Activated CD4-positive, alpha-beta memory T cell treated with anti-CD3 and anti-CD28 coated beads for 36 hours (primary cell): ENCODE measurements at regions of chr22 and their contacts with region 1.

Region 1: GRCh38 chr22:18077639-18078328 is at the start of gene PEX26:
- DNase-seq: peak; percentile 97
- H3K4me3 Mint-ChIP-seq: peak within 1 kb of the TSS; percentile 95
- H3K27ac Mint-ChIP-seq: peak within 1 kb of the TSS; percentile 96
- H3K4me1 Mint-ChIP-seq: peaks cover 51% of the 10 kb centered on the region
- H3K27me3 Mint-ChIP-seq: no peaks in the 10 kb centered on the region
- total RNA-seq, gene PEX26: 56.3 to 56.8 TPM

Region 2: GRCh38 chr22:17638432-17639246 is 439.1 kb before region 1 on chr22 and contains the start of gene BCL2L13:
- CTCF ChIA-PET with region 1: no interaction called
- POLR2A ChIA-PET with region 1: interaction called, 4 read pairs
- intact Hi-C with region 1: loop called (anchors 5 kb)
- DNase-seq: peak; percentile 93
- H3K4me3 Mint-ChIP-seq: peak within 1 kb of the TSS; percentile 87
- H3K27ac Mint-ChIP-seq: peak within 1 kb of the TSS; percentile 89
- H3K4me1 Mint-ChIP-seq: peaks cover 21% of the 10 kb centered on the region
- H3K27me3 Mint-ChIP-seq: no peaks in the 10 kb centered on the region
- total RNA-seq, gene BCL2L13: 34.5 to 36.2 TPM

Region 3: GRCh38 chr22:17742527-17742902 is 335.3 kb before region 1 on chr22:
- CTCF ChIA-PET with region 1: interaction called, 73 read pairs
- POLR2A ChIA-PET with region 1: no interaction called
- intact Hi-C with region 1: loop called (anchors 2 kb)
- DNase-seq: peak; percentile 81
- H3K4me3 Mint-ChIP-seq: no peak overlapping the region
- H3K27ac Mint-ChIP-seq: no peak overlapping the region
- H3K4me1 Mint-ChIP-seq: peaks cover 2% of the 10 kb centered on the region
- H3K27me3 Mint-ChIP-seq: no peaks in the 10 kb centered on the region

Region 4: DNA sequence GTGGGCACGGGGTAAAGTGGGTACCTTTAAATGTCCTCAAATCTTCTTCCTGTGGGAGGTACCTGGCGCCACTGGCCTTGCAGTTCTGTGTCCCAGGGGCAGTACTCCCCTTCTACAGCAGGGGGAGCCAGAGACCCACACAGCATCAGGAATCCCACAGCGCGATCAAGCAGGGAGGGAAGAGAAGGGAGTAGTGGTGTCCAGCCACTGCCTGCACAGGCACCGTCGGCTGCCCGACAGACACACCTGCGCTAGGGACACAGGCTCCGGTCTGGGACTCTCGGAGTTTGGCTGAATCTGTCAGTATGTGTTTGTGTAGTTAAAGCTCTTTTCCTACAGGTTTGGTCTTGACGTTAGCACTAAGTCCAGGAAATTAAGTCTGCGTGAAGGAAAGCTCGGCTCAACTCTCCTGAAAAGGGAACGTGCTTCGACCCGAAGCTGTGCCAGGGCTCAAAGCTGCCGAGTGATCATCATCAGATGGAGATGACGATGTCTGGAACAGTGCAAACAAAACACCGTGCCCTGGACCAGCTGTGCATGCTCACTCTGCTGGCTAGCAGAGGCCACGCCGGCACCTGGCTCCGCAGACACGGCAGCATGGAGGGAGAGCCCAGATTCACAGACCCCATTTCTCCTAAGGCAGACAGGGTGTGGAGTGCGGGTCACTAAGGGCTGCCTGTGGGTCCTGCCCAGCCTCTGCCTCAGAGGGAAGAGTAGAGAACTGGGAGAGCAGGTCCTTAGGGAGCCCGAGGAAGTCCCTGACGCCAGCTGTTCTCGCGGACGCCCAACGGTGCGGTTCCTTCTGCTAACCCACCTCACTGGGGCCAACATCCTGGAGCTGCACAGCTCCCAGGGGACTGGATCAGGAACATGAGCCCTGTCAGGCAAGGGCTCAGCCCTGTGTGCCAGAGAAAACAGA is 247.5 kb before region 1 on chr22:
- CTCF ChIA-PET with region 1: interaction called, 210 read pairs
- POLR2A ChIA-PET with region 1: interaction called, 3 read pairs
- intact Hi-C with region 1: loop called (anchors 1 kb)
- DNase-seq: peak; percentile 88
- H3K4me3 Mint-ChIP-seq: no peak overlapping the region
- H3K27ac Mint-ChIP-seq: no peak overlapping the region
- H3K4me1 Mint-ChIP-seq: no peaks in the 10 kb centered on the region
- H3K27me3 Mint-ChIP-seq: no peaks in the 10 kb centered on the region

Region 5: GRCh38 chr22:18024276-18024947 is 53.4 kb before region 1 on chr22 and contains the start of gene MICAL3:
- CTCF ChIA-PET with region 1: interaction called, 40 read pairs
- POLR2A ChIA-PET with region 1: no interaction called
- intact Hi-C with region 1: loop called (anchors 2 kb)
- DNase-seq: peak; percentile 74
- H3K4me3 Mint-ChIP-seq: peak within 1 kb of the TSS; percentile 80
- H3K27ac Mint-ChIP-seq: no peak within 1 kb of the TSS
- H3K4me1 Mint-ChIP-seq: peaks cover 11% of the 10 kb centered on the region
- H3K27me3 Mint-ChIP-seq: peaks cover 25% of the 10 kb centered on the region
- total RNA-seq, gene MICAL3: 29.7 to 37.2 TPM

Region 6: GRCh38 chr22:18110194-18110953 is 32.6 kb after region 1 on chr22 and contains the start of gene TUBA8:
- CTCF ChIA-PET with region 1: interaction called, 11 read pairs
- POLR2A ChIA-PET with region 1: interaction called, 12 read pairs
- intact Hi-C with region 1: loop called (anchors 1 kb)
- DNase-seq: peak; percentile 59
- H3K4me3 Mint-ChIP-seq: peak within 1 kb of the TSS; percentile 61
- H3K27ac Mint-ChIP-seq: no peak within 1 kb of the TSS
- H3K4me1 Mint-ChIP-seq: peaks cover 46% of the 10 kb centered on the region
- H3K27me3 Mint-ChIP-seq: peaks cover 22% of the 10 kb centered on the region
- total RNA-seq, gene TUBA8: 3.3 to 4.3 TPM